MCF 10A (cell line): ENCODE measurements at regions of chr7 and their contacts with region 1.

Region 1: GRCh38 chr7:101077303-101078089 is 7.8 kb upstream of the TRIM56 start:
- DNase-seq: peak; percentile 81
- H3K4me3 Mint-ChIP-seq: no peak overlapping the region
- H3K27ac Mint-ChIP-seq: no peak overlapping the region
- H3K4me1 Mint-ChIP-seq: peaks cover 5% of the 10 kb centered on the region
- H3K27me3 Mint-ChIP-seq: no peaks in the 10 kb centered on the region
- CTCF ChIP-seq: peak; percentile 81

Region 2: DNA sequence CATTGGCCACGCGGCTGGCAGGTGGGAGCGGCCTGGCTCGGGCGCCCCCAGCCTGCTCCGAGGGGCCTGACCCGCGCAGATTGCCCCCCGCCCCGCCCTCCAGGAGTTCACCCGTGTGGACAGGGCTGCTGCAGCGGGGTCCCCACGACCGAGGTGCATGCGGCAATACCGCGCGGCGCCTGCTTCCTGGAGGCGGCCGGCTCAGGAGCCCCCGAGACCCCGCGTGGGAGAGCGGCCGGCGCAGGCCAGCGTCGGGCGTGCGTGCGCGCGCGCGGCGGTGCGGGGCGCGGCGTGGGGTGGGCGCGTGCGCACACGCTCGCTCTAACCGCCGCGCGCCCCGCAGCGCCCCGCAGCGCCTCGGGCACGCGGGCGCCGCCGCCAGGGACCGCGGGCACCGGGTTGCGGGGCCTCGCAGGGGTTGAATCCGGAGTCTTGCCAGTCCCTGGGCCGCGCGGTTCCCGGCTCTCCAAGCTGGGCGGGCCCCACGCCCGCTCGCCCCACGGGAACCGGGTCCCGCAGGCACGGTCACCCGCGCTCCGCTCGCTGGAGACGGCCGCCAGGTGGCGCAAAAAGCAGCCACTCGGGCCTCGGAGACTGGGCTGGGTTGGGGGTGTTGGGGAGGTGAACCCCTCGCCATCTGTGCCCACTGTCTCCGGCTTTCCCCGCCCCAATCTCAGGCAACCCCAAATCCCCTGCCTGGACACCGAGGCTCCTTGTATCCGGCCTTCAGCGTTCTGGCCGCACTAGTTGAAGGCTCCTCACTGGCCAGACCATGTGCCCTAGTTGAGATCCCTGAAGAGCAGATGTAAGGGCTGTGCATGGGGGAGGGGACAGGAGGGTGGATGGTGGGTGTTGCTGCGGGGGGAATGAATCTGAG is 180.5 kb before region 1 on chr7:
- CTCF ChIA-PET with region 1: interaction called, 8 read pairs
- POLR2A ChIA-PET with region 1: no interaction called
- intact Hi-C with region 1: loop called (anchors 1 kb)
- DNase-seq: no peak
- H3K4me3 Mint-ChIP-seq: no peak overlapping the region
- H3K27ac Mint-ChIP-seq: no peak overlapping the region
- H3K4me1 Mint-ChIP-seq: peaks cover 6% of the 10 kb centered on the region
- H3K27me3 Mint-ChIP-seq: peaks cover 36% of the 10 kb centered on the region
- CTCF ChIP-seq: peak; percentile 75

Region 3: DNA sequence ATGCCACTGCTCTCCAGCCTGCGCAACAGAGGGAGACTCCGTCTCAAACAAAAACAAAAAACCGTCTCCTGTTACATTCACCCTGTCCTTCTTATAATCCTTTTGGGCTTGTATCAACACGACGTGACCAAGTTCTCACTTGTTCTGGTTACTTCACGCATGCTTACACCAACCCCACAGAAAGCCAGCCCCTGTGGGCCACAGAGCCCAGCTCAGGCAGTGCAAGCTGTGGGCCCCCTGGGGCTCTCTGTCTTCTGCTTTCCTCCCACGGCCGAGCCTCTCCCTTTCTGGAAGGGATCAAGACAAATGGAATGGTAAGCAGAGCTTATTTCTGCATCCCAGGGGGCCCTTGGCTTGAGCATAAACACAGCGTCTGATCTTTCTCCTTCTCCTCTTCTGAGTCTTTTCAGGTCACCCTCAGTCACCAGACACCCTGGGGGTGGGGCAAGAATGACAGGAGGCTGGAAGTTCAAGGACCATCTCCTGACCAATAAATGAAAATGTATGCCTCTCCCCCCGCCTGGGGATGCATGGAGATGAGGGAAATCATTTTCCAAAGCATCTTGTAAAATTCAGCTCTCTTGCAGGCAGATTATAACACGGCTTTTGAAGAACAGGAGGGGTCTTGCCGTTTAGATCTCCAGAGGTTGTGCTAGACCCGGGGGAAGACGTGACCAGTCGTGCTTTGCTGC is 11.2 kb before region 1 on chr7:
- CTCF ChIA-PET with region 1: interaction called, 17 read pairs
- POLR2A ChIA-PET with region 1: interaction called, 4 read pairs
- intact Hi-C with region 1: no loop called
- DNase-seq: peak; percentile 65
- H3K4me3 Mint-ChIP-seq: no peak overlapping the region
- H3K27ac Mint-ChIP-seq: no peak overlapping the region
- H3K4me1 Mint-ChIP-seq: peaks cover 10% of the 10 kb centered on the region
- H3K27me3 Mint-ChIP-seq: peaks cover 44% of the 10 kb centered on the region
- CTCF ChIP-seq: no peak